ENCODE measurements at regions of chr18 and their contacts with region 1.

Region 1: DNA sequence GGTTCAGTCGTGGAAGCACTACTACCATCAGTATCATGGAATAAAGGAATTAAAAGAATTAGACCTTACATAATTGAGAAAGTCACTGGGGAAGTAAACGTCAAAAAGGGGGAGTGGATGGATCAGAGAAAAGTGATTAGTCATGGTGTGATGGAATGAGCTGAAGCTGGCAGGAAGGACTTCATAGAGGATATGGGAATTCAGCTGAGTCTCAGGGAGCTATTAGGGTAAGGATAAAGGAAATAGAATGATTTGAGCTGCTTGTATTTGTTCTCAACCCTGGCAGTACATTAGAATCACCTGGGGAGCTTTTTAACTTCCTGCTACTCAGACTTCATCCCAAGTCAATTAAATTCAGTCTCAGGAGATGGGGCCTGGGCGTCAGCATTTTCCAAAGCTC is 53.4 kb upstream of the SETBP1 start:
- DNase-seq: no peak
- ATAC-seq: no peak
- H3K4me3 ChIP-seq: no peak overlapping the region
- H3K27ac ChIP-seq: no peak overlapping the region
- H3K4me1 ChIP-seq: no peaks in the 10 kb centered on the region
- H3K27me3 ChIP-seq: no peaks in the 10 kb centered on the region
- CTCF ChIP-seq: no peak
- EP300 ChIP-seq: no peak
- POLR2A ChIP-seq: no peak
- RAD21 ChIP-seq: no peak

Region 2: DNA sequence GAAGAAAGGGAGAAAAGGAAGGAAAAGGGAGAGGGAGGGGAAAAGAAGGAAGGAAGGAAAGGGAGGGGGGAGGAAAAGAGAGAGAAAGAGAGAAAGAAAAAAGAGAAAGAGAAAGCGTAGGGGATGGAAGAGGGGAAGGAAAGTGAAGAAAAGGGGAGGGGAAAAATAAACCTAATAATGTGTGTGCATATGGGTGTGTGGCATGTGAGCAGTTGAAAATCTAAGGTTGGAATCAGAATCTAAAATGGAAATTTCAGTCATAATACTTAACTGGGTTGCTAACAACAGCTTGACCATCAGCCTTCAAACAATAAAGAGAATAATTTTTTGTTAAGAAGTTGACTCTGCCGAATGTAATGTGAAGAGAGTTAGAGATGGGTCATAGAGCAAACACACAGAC is 580.0 kb after region 1 on chr18:
- CTCF ChIA-PET with region 1: no interaction called
- POLR2A ChIA-PET with region 1: no interaction called
- in situ Hi-C with region 1: no loop called
- intact Hi-C with region 1: loop called (anchors 5 kb)
- DNase-seq: no peak
- ATAC-seq: no peak
- H3K4me3 ChIP-seq: no peak overlapping the region
- H3K27ac ChIP-seq: no peak overlapping the region
- H3K4me1 ChIP-seq: no peaks in the 10 kb centered on the region
- H3K27me3 ChIP-seq: no peaks in the 10 kb centered on the region
- CTCF ChIP-seq: no peak
- EP300 ChIP-seq: no peak
- POLR2A ChIP-seq: no peak
- RAD21 ChIP-seq: no peak

Measured in HepG2 (cell line).